CD8-positive, alpha-beta T cell (primary cell): ENCODE measurements at regions of chr17 and their contacts with region 1.

Region 1: DNA sequence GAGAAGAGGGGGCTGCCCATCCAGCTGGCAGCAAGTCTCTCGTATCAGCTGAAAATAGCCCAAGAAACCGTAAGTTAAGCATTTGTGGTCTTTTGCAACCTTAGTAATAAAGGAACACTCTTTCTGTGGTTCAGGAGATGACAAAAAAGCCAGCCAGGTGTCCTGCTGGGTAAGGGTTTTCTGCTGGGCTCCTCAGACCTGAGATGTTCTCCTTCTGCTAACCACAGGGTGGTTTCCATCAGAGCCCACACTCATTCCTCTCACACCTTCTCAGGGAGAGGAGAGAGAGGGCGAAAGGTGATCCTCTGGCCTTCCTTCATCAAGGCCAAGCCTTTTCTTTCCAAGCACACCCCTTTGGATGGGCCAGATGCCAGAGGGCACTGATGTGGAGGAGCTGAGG is 70.7 kb downstream of the TEX14 start:
- DNase-seq: no peak
- ATAC-seq: no peak
- H3K4me3 ChIP-seq: no peak overlapping the region
- H3K4me3 Mint-ChIP-seq: no peak overlapping the region
- H3K27ac ChIP-seq: no peak overlapping the region
- H3K27ac Mint-ChIP-seq: no peak overlapping the region
- H3K4me1 ChIP-seq: no peaks in the 10 kb centered on the region
- H3K4me1 Mint-ChIP-seq: no peaks in the 10 kb centered on the region
- H3K27me3 ChIP-seq: no peaks in the 10 kb centered on the region
- H3K27me3 Mint-ChIP-seq: no peaks in the 10 kb centered on the region
- CTCF ChIP-seq: no peak

Region 2: GRCh38 chr17:58643140-58643539 is 22.0 kb after region 1 on chr17:
- CTCF ChIA-PET with region 1: no interaction called
- POLR2A ChIA-PET with region 1: interaction called, 3 read pairs
- intact Hi-C with region 1: loop called in 1 of 2 experiments (anchors 2 kb)
- DNase-seq: no peak
- ATAC-seq: no peak
- H3K4me3 ChIP-seq: no peak overlapping the region
- H3K4me3 Mint-ChIP-seq: no peak overlapping the region
- H3K27ac ChIP-seq: no peak overlapping the region
- H3K27ac Mint-ChIP-seq: no peak overlapping the region
- H3K4me1 ChIP-seq: no peaks in the 10 kb centered on the region
- H3K4me1 Mint-ChIP-seq: no peaks in the 10 kb centered on the region
- H3K27me3 ChIP-seq: no peaks in the 10 kb centered on the region
- H3K27me3 Mint-ChIP-seq: no peaks in the 10 kb centered on the region
- CTCF ChIP-seq: no peak

Region 3: DNA sequence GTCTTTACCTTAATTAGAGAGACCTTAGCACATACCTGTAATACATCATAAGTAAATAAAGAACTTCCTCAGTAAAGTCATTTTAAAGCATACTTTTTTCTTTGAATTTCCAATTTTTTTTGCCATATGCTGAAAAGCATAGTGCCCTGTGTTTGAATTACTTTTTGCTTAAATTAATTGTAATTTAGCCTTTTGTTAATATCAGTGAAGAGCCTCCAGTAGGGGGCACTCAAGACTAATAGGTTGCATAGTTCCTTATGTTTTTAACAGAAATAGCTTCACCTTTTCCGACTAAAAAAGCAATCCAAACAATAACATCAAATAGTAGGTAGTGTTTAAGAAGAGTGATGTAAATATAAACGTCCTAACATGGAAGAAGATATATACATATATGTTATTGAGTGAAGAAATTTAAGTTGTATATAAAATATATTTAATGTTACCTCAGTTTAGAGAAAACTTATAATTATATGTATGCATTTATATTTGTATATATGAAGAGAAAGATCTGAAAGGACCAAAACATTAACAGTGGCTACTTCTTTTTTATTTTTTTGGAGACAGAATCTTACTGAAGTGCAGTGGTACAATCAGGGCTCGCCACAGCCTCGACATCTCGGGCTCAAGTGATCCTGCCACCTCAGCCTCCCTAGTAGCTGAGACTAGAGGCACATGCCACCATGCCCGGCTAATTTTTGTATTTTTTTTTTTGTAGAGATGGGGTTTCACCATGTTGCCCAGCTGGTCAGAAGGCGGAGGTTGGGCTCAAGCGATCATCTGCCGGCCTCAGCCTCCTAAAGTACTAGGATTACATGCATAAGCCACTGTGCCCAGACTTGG is 90.0 kb after region 1 on chr17:
- CTCF ChIA-PET with region 1: no interaction called
- POLR2A ChIA-PET with region 1: no interaction called
- intact Hi-C with region 1: no loop called
- DNase-seq: peak in 6 of 9 experiments; percentile 9 to 67 (median 44)
- ATAC-seq: no peak
- H3K4me3 ChIP-seq: no peak overlapping the region
- H3K4me3 Mint-ChIP-seq: no peak overlapping the region
- H3K27ac ChIP-seq: no peak overlapping the region
- H3K27ac Mint-ChIP-seq: no peak overlapping the region
- H3K4me1 ChIP-seq: no peaks in the 10 kb centered on the region
- H3K4me1 Mint-ChIP-seq: no peaks in the 10 kb centered on the region
- H3K27me3 ChIP-seq: no peaks in the 10 kb centered on the region
- H3K27me3 Mint-ChIP-seq: no peaks in the 10 kb centered on the region
- CTCF ChIP-seq: peak; percentile 86